Activated CD4-positive, alpha-beta T cell treated with anti-CD3 and anti-CD28 coated beads for 36 hours (primary cell): ENCODE measurements at regions of chr4 and their contacts with region 1.

Region 1: GRCh38 chr4:2220016-2220630 is 21.8 kb downstream of the HAUS3 start:
- DNase-seq: peak; percentile 88
- ATAC-seq: peak; percentile 95
- H3K4me3 Mint-ChIP-seq: no peak overlapping the region
- H3K27ac Mint-ChIP-seq: no peak overlapping the region
- H3K4me1 Mint-ChIP-seq: no peaks in the 10 kb centered on the region
- H3K27me3 Mint-ChIP-seq: no peaks in the 10 kb centered on the region

Region 2: GRCh38 chr4:2354118-2354517 is 134.0 kb after region 1 on chr4:
- CTCF ChIA-PET with region 1: interaction called, 4 read pairs
- POLR2A ChIA-PET with region 1: no interaction called
- intact Hi-C with region 1: loop called (anchors 1 to 5 kb)
- DNase-seq: peak; percentile 31
- ATAC-seq: peak; percentile 49
- H3K4me3 Mint-ChIP-seq: no peak overlapping the region
- H3K27ac Mint-ChIP-seq: no peak overlapping the region
- H3K4me1 Mint-ChIP-seq: peaks cover 6% of the 10 kb centered on the region
- H3K27me3 Mint-ChIP-seq: no peaks in the 10 kb centered on the region

Region 3: DNA sequence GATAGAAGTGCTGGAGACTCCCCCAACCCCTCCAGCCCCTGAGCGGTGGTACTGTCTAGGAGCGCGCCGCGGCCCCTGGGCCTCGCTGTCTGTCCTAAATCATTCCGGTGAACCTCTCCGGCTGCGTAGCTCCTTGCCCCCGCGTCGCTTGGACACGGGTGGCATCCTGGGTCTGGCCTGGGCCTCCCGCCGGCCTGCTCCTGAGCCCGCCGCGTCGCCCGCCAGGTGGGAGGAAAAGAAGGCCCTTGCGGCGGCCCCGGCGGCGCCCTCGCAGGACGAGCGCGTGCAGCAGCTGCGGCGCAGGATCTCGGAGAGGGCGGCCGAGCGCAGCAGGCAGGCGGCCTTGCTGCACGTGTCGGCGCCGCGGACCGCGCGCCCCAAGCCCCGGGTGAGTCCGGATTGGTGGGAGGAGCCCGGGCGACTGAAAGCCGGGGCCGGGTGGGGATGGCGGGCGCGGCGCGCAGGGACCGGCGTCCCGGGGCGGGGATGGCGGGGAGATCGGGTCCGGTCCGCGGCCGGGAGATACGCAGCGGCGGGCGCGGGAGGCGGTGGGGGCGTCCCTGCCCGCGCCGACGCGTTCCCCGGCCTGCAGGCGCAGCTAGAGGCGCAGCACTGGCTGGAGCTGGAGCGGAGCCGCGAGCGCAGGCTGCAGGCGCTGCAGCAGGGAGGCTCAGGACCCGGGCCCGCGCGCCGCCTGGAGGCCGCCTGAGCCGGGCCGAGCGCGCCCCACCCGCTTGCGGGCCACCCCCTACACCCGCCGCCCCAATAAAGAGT is 242.3 kb after region 1 on chr4:
- CTCF ChIA-PET with region 1: interaction called, 17 read pairs
- POLR2A ChIA-PET with region 1: no interaction called
- intact Hi-C with region 1: loop called (anchors 1 kb)
- DNase-seq: peak; percentile 80
- ATAC-seq: peak; percentile 98
- H3K4me3 Mint-ChIP-seq: peak overlapping the region; percentile 68
- H3K27ac Mint-ChIP-seq: no peak overlapping the region
- H3K4me1 Mint-ChIP-seq: peaks cover 12% of the 10 kb centered on the region
- H3K27me3 Mint-ChIP-seq: peaks cover 3% of the 10 kb centered on the region